CD8-positive, alpha-beta T cell (primary cell): ENCODE measurements at regions of chr1 and their contacts with region 1.

Region 1: GRCh38 chr1:11907275-11908094 is 18.7 kb downstream of the KIAA2013 start:
- DNase-seq: peak; percentile 70 to 96 (median 92)
- ATAC-seq: peak; percentile 68
- H3K4me3 ChIP-seq: peak overlapping the region in 1 of 2 experiments; percentile 76
- H3K4me3 Mint-ChIP-seq: peak overlapping the region; percentile 92
- H3K27ac ChIP-seq: peak overlapping the region; percentile 99 to 100
- H3K27ac Mint-ChIP-seq: peak overlapping the region; percentile 100
- H3K4me1 ChIP-seq: peaks cover 20% of the 10 kb centered on the region
- H3K4me1 Mint-ChIP-seq: peaks cover 33% of the 10 kb centered on the region
- H3K27me3 ChIP-seq: peaks cover under 1% of the 10 kb centered on the region in 2 experiments
- H3K27me3 Mint-ChIP-seq: peaks cover 2% of the 10 kb centered on the region
- CTCF ChIP-seq: peak; percentile 65

Region 2: DNA sequence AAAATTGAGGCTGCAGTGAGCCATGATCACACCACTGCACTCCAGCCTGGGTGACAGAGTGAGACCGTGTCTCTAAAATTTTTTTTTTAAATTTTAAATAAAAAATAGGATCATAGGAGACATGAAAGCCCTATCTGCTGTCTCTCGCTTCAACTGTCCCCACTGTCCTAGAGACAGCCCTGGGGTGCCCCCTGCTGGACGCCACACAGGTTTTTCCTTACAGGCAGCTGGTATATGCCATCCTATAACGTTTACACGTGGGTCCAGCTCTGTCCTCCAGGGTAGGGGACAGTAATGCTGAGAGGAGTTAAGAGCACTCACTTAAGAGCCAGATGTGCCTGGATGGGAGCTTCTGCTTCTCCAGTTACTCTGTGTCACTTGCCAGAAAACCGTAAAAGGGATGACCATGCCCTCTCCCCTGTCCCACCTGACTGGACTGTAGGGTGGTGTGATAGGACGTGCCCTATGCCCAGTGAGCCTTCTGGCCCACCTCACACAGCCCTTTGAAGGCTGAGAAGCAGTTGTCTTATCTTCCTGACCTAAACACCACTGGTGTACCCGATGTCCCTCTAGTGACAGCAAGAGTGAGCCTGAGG is 261.7 kb before region 1 on chr1:
- CTCF ChIA-PET with region 1: no interaction called
- POLR2A ChIA-PET with region 1: interaction called, 3 read pairs
- intact Hi-C with region 1: loop called in 1 of 2 experiments (anchors 5 kb)
- DNase-seq: peak; percentile 57 to 85 (median 81)
- ATAC-seq: peak; percentile 47
- H3K4me3 ChIP-seq: no peak overlapping the region
- H3K4me3 Mint-ChIP-seq: no peak overlapping the region
- H3K27ac ChIP-seq: no peak overlapping the region
- H3K27ac Mint-ChIP-seq: no peak overlapping the region
- H3K4me1 ChIP-seq: peaks cover 17% of the 10 kb centered on the region
- H3K4me1 Mint-ChIP-seq: peaks cover 15% of the 10 kb centered on the region
- H3K27me3 ChIP-seq: no peaks in the 10 kb centered on the region
- H3K27me3 Mint-ChIP-seq: no peaks in the 10 kb centered on the region
- CTCF ChIP-seq: peak; percentile 85

Region 3: GRCh38 chr1:11805447-11806306 is 101.8 kb before region 1 on chr1 and contains the starts of genes CLCN6 and MTHFR:
- CTCF ChIA-PET with region 1: no interaction called
- POLR2A ChIA-PET with region 1: interaction called, 51 read pairs
- intact Hi-C with region 1: loop called in 1 of 2 experiments (anchors 1 kb)
- DNase-seq: peak; percentile 93 to 99 (median 97)
- ATAC-seq: peak; percentile 85
- H3K4me3 ChIP-seq: peak within 1 kb of the TSS; percentile 73 to 96
- H3K4me3 Mint-ChIP-seq: peak within 1 kb of the TSS; percentile 99
- H3K27ac ChIP-seq: peak within 1 kb of the TSS; percentile 80 to 86
- H3K27ac Mint-ChIP-seq: peak within 1 kb of the TSS; percentile 98
- H3K4me1 ChIP-seq: peaks cover 48% of the 10 kb centered on the region
- H3K4me1 Mint-ChIP-seq: peaks cover 63% of the 10 kb centered on the region
- H3K27me3 ChIP-seq: no peaks in the 10 kb centered on the region
- H3K27me3 Mint-ChIP-seq: no peaks in the 10 kb centered on the region
- CTCF ChIP-seq: no peak
- total RNA-seq, gene CLCN6: 14.8 to 18.5 TPM
- total RNA-seq, gene MTHFR: 27.3 to 27.5 TPM

Region 4: DNA sequence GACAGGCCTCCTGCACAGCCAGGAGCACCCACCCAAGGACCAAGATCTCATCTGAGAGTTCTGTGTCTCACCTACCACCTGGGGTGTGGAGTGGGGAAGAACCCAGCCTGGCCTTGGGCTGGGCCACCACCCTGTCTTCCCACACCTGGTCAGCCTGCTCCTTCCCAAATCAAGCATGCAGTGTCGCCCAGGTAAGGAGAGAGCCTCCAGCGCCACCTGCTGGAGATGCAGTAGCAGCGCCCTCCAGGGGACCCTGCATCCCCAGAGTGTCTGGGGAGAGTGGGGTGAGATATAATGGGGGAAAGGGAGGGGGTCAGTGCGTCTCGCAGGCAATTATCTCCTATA is 13.6 kb before region 1 on chr1:
- CTCF ChIA-PET with region 1: interaction called, 15 read pairs
- POLR2A ChIA-PET with region 1: interaction called, 8 read pairs
- intact Hi-C with region 1: no loop called
- DNase-seq: peak; percentile 37 to 78 (median 70)
- ATAC-seq: peak; percentile 89
- H3K4me3 ChIP-seq: no peak overlapping the region
- H3K4me3 Mint-ChIP-seq: no peak overlapping the region
- H3K27ac ChIP-seq: no peak overlapping the region
- H3K27ac Mint-ChIP-seq: no peak overlapping the region
- H3K4me1 ChIP-seq: no peaks in the 10 kb centered on the region
- H3K4me1 Mint-ChIP-seq: no peaks in the 10 kb centered on the region
- H3K27me3 ChIP-seq: peaks cover 4 to 17% of the 10 kb centered on the region in 2 experiments
- H3K27me3 Mint-ChIP-seq: peaks cover 40% of the 10 kb centered on the region
- CTCF ChIP-seq: peak; percentile 84

Region 5: GRCh38 chr1:11925938-11926292 is 18.4 kb after region 1 on chr1:
- CTCF ChIA-PET with region 1: interaction called, 3 read pairs
- POLR2A ChIA-PET with region 1: interaction called, 23 read pairs
- intact Hi-C with region 1: loop called (anchors 1 kb)
- DNase-seq: peak in 2 of 9 experiments; percentile 12 to 20
- ATAC-seq: peak; percentile 34
- H3K4me3 ChIP-seq: peak overlapping the region in 1 of 2 experiments; percentile 26
- H3K4me3 Mint-ChIP-seq: peak overlapping the region; percentile 86
- H3K27ac ChIP-seq: no peak overlapping the region
- H3K27ac Mint-ChIP-seq: no peak overlapping the region
- H3K4me1 ChIP-seq: peaks cover 34% of the 10 kb centered on the region
- H3K4me1 Mint-ChIP-seq: peaks cover 29% of the 10 kb centered on the region
- H3K27me3 ChIP-seq: no peaks in the 10 kb centered on the region
- H3K27me3 Mint-ChIP-seq: no peaks in the 10 kb centered on the region
- CTCF ChIP-seq: no peak

Region 6: DNA sequence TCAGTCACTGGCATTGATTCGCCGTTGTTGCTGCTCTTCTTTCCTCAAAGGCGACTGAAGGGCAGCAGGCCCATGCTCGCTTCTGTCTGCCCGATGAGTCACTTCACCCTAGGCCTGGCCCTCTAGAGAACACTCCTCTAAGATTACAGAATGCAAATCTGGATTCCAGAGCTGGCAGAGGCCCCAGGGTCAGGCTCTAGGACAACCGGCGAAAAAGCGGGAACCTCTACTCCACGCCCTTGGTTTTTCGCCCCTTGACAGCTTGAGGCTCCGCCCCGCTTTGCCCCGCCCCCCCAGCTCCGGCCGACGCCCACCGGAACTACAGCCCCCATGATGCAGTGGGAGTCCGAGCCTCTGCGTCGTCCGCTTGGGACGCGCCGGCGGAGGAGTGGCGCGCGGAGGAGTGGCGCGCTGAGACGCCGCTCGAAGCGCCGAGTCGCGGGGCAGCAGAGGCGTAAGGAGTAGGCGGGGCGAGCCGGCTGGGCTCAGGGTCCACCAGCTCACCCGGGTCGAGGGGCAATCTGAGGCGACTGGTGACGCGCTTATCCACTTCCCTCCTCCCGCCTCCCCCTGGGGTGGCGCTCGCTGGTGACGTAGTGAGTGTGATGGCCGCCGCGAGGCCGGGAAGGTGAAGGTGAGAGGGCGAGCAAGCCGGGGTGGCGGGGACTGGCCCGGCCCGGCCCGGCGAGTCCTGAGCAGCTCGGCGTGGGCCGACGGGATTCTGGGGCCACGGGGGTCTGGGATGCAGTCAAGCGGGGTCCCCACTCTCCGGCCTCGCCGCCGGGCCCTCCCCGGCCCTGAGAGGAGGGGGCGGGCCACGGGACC is 72.6 kb after region 1 on chr1 and contains the start of gene MFN2:
- CTCF ChIA-PET with region 1: interaction called, 6 read pairs
- POLR2A ChIA-PET with region 1: interaction called, 67 read pairs
- intact Hi-C with region 1: loop called (anchors 1 kb)
- DNase-seq: peak; percentile 87 to 97 (median 92)
- ATAC-seq: peak; percentile 89
- H3K4me3 ChIP-seq: peak within 1 kb of the TSS; percentile 70 to 94
- H3K4me3 Mint-ChIP-seq: peak within 1 kb of the TSS; percentile 89
- H3K27ac ChIP-seq: peak within 1 kb of the TSS; percentile 91 to 95
- H3K27ac Mint-ChIP-seq: peak within 1 kb of the TSS; percentile 95
- H3K4me1 ChIP-seq: peaks cover 23% of the 10 kb centered on the region
- H3K4me1 Mint-ChIP-seq: peaks cover 43% of the 10 kb centered on the region
- H3K27me3 ChIP-seq: no peaks in the 10 kb centered on the region
- H3K27me3 Mint-ChIP-seq: no peaks in the 10 kb centered on the region
- CTCF ChIP-seq: no peak
- total RNA-seq, gene MFN2: 41.7 to 46.0 TPM

Region 7: DNA sequence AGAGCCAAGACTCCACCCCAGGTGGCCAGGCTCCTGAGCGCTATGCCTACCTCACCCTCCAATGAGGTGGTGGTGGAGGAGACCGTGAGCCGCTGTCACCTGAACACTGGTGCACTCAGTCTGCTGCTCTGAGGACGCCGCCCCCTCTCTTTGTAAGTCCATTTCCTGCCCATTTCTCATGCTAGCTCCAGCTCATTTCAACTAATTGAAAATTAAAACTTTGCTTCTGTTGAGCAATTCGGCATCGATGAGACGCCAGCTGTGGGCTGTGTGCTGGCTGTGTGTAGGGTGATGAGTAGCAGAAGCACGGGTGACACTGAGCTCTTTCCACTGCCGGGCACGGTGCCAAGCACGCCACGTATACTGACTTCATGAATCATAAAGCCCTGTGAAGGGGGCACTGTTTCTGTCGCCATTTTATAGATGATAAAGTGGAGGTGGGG is 270.5 kb after region 1 on chr1:
- CTCF ChIA-PET with region 1: no interaction called
- POLR2A ChIA-PET with region 1: interaction called, 3 read pairs
- intact Hi-C with region 1: loop called in 1 of 2 experiments (anchors 5 kb)
- DNase-seq: peak; percentile 77 to 97 (median 95)
- ATAC-seq: peak; percentile 68
- H3K4me3 ChIP-seq: peak overlapping the region; percentile 34 to 36
- H3K4me3 Mint-ChIP-seq: peak overlapping the region; percentile 82
- H3K27ac ChIP-seq: peak overlapping the region; percentile 71 to 94
- H3K27ac Mint-ChIP-seq: peak overlapping the region; percentile 99
- H3K4me1 ChIP-seq: peaks cover 75% of the 10 kb centered on the region
- H3K4me1 Mint-ChIP-seq: peaks cover 77% of the 10 kb centered on the region
- H3K27me3 ChIP-seq: no peaks in the 10 kb centered on the region
- H3K27me3 Mint-ChIP-seq: no peaks in the 10 kb centered on the region
- CTCF ChIP-seq: no peak

Region 8: GRCh38 chr1:12477936-12478611 is 570.6 kb after region 1 on chr1:
- CTCF ChIA-PET with region 1: no interaction called
- POLR2A ChIA-PET with region 1: no interaction called
- intact Hi-C with region 1: no loop called
- DNase-seq: peak in 2 of 9 experiments; percentile 40 to 54
- ATAC-seq: peak; percentile 19
- H3K4me3 ChIP-seq: no peak overlapping the region
- H3K4me3 Mint-ChIP-seq: peak overlapping the region; percentile 72
- H3K27ac ChIP-seq: peak overlapping the region; percentile 6 to 63
- H3K27ac Mint-ChIP-seq: peak overlapping the region; percentile 97
- H3K4me1 ChIP-seq: peaks cover 90% of the 10 kb centered on the region
- H3K4me1 Mint-ChIP-seq: peaks cover 90% of the 10 kb centered on the region
- H3K27me3 ChIP-seq: no peaks in the 10 kb centered on the region
- H3K27me3 Mint-ChIP-seq: no peaks in the 10 kb centered on the region
- CTCF ChIP-seq: no peak